Left cardiac atrium (tissue), 4 donors: ENCODE measurements at regions of chr12 and their contacts with region 1.

Region 1: DNA sequence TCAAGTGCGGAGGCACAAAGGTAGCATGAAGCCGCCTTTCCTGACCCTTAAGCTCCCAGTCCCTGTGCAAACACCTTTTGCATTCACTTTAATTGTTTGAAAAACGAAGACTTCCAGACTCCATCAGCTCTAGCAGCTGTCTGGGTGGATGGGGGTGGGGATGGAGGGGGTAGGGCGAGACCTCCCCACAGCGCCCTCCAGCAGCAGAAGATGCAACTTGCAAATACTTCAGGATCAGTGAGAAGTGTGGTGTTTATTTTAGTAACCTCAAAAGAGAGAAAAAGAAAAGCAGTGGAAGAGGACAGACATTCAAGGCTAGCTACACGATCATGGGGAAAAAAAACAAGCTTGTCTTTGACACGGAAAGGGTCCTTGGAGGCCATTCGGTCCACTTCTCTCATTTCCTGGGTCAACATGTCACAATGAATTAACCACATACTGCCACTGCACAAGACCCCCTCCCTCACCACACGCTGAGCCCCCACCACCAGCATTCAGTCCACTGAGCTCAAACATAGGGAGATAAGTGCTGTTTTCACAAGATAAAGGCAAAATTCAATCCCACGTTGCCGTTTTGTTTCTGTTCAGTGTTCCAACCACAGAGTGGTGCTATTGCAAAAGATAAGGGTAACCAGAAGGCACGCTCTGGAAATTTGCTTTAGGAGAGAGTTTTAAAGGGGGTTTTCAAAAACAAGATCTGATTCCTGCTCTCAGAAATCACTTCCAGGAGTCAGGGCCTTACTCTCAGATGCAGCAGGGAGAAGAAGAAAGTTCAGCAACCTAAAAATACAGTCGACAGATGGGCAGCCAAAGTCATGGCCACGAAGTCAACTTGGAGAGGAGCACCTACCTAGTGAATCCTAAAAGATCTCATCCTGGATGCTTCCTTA is 3.3 kb upstream of the NTF3 start:
- DNase-seq: no peak
- ATAC-seq: no peak

Region 2: DNA sequence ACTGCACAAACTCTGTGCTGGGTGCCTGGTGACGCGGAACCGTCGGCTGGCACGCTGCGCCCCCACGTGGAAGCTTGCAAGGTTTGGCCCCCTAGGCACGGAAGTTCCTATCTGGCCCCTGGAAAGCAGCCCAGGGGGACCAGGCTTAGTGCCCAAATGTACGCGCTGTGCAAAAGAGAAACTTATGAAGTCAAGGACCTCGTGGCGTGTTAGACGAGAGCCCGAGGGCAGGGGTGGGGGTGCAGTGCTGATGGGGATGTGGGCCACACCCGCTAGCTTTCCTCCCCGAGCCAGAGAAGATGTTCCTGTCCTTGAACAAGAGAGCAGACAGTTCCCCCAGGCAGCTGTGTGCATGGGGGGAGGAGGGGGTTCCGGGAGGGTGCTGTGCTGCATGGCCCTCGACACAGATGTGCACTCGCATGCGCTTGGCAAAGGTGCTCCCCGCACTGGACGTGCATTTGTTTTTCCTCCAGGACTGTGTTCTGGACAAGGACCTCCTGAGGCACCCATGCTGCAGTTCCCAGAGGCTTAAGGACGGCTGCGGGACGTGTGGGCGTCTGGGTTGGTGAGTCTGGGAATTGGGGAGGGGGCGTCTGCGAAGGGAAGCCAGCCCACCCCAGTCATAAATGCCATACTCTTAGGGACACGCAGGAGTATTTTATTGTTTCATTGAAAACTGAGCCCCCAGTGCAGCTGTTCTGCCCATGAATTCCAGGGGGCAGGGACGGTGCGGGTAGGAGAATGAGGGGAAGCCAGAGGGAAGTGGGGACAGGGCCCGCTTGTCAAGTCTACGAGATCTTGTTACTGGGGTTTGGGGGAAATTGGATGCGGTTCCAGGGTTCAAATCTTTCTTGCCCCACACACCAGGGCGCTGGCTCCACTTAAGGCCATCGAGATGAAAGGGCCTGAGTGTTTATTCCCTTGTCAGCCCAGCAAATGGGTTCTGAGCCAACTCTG is 83.3 kb after region 1 on chr12:
- intact Hi-C with region 1: loop called in 1 of 2 experiments (anchors 5 kb)
- DNase-seq: peak; percentile 57
- ATAC-seq: peak; percentile 38 to 53

Region 3: GRCh38 chr12:5648692-5649359 is 220.2 kb after region 1 on chr12:
- intact Hi-C with region 1: loop called in 1 of 2 experiments (anchors 10 kb)
- DNase-seq: no peak
- ATAC-seq: peak in 1 of 2 donors; percentile 67

Region 4: DNA sequence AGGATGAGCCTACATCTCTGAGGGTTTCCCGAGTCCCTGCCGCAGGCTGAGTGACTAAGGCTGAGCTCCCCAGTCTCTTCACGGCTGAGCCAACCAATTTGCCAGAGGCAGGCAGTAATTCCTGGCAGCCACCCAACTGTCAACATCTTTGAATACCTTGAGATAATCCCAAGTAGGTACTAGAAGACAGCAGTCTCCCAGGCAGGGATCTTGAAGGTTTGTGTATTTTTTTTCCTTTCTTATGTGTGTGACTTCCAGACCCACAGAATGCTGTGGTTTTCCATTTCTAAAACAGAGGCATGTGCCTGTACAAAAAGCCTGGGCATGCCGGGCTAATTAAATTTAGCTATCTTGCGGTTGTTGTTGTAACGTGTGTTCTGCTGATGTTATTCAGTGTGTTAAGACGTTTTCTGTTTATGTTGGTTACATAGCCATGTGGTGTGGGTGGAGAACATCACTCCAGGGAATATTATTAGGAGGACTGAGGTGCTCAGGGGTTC is 360.9 kb after region 1 on chr12:
- intact Hi-C with region 1: loop called in 1 of 2 experiments (anchors 5 kb)
- DNase-seq: no peak
- ATAC-seq: no peak